Activated T-helper 1 cell treated with anti-CD3 and anti-CD28 coated beads, Interleukin-12 subunit alpha, Interleukin-12 subunit beta, Interleukin-2, Interleukin-4 antibody, amounts not matched to agents 30 ng/mL and 10 ng/mL and 1 ng/mL, durations not matched to agents 14 hours and 24 hours and 36 hours (primary cell): ENCODE measurements at regions of chr3 and their contacts with region 1.

Region 1: DNA sequence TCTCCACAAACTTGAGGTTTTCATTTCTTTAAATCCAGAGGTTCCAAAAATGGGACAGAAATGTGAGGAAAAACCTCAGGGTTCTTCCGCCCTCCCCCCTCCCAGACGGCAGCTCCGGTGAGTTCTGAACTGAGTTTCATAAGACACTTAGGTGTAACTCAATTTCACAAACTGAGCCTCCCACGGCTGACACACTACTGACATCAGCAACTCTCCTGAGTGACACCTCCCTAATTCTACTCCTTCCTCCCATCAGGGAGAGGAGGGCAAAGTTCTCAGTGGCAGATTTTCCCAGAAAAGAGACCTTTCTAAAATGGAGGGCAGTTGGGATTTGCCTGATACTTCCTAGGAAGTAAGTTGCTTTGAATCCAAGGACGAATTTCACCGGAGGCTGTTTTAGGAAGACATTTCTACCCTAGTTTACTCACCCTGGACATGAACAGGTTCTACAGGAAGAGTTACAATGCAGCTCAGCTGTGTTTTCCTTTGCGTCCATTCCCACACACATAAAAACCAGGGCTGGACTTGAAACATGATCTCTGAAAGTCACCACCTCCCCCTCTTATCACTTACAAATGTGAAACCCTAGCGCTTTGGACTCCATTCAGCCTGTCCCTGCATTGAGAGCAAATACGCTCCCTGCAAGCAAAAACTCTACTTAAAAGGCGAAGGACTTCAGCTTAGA is 78.1 kb upstream of the LMOD3 start:
- DNase-seq: peak; percentile 36
- H3K4me3 Mint-ChIP-seq: peak overlapping the region; percentile 92
- H3K27ac Mint-ChIP-seq: peak overlapping the region; percentile 92
- H3K4me1 Mint-ChIP-seq: peaks cover 79% of the 10 kb centered on the region
- H3K27me3 Mint-ChIP-seq: no peaks in the 10 kb centered on the region

Region 2: DNA sequence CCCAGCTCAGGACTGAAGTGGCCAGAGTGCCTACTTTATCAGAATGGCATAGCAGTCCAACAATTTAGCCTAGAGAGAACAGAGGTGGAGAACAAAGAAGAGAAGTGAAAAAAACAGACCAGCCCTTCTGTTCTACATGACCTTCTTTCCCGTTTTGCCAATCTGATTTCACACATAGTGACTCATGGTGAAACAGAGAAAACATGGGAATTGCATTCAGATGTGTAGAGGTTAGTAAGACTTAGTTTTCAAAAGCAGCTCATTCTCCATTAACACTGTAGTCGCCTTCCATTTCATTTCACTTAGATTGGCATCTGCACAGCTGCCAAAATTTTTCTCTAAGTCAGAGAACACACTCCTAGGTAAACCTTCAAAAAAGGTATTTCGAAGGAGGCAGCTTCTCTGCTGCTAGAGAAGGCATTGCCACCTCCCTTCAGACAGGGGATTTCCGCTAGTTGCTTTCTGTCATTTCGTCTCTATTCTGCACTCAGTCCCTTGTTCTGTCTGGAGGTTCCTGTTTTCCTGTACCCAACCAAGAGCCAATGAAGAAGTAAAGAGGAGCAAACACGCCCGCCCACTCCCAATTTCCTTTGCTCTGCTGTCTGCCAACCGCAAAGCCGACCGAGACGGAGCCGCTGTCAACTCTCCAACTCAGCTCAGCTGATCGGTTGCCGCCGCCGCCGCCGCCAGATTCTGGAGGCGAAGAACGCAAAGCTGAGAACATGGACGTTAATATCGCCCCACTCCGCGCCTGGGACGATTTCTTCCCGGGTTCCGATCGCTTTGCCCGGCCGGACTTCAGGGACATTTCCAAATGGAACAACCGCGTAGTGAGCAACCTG is 116.0 kb before region 1 on chr3 and contains the start of gene ARL6IP5:
- intact Hi-C with region 1: loop called (anchors 1 kb)
- DNase-seq: peak; percentile 89
- H3K4me3 Mint-ChIP-seq: peak within 1 kb of the TSS; percentile 98
- H3K27ac Mint-ChIP-seq: peak within 1 kb of the TSS; percentile 94
- H3K4me1 Mint-ChIP-seq: peaks cover 61% of the 10 kb centered on the region
- H3K27me3 Mint-ChIP-seq: no peaks in the 10 kb centered on the region
- total RNA-seq, gene ARL6IP5: 147 and 156 TPM in 2 replicates

Region 3: GRCh38 chr3:69094467-69095205 is 105.9 kb before region 1 on chr3:
- intact Hi-C with region 1: no loop called
- DNase-seq: no peak
- H3K4me3 Mint-ChIP-seq: peak overlapping the region; percentile 84
- H3K27ac Mint-ChIP-seq: peak overlapping the region; percentile 98
- H3K4me1 Mint-ChIP-seq: peaks cover 81% of the 10 kb centered on the region
- H3K27me3 Mint-ChIP-seq: no peaks in the 10 kb centered on the region

Region 4: GRCh38 chr3:69212411-69213139 is 12.0 kb after region 1 on chr3:
- intact Hi-C with region 1: loop called (anchors 1 kb)
- DNase-seq: no peak
- H3K4me3 Mint-ChIP-seq: peak overlapping the region; percentile 43
- H3K27ac Mint-ChIP-seq: peak overlapping the region; percentile 92
- H3K4me1 Mint-ChIP-seq: peaks cover 57% of the 10 kb centered on the region
- H3K27me3 Mint-ChIP-seq: no peaks in the 10 kb centered on the region

Region 5: DNA sequence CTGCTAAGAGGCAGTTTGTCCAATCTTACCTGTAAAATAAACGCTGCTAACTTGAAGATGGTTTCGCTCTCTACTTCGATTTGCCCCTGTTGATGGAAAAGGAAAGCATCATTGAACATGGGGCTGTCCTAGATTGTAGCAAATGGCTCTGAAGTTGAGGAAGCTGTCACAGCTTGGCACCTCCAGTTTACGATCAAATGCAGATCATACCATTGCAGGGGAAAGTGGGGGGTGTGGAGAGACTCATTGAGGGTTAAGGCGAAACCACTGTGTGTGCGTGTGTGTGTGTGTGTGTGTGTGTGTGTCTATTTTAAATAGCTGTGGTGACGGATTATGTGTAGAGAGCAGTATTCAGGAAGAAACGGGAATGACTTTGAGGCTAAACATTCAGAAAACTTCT is 49.5 kb after region 1 on chr3:
- intact Hi-C with region 1: loop called (anchors 1 kb)
- DNase-seq: peak; percentile 58
- H3K4me3 Mint-ChIP-seq: peak overlapping the region; percentile 71
- H3K27ac Mint-ChIP-seq: peak overlapping the region; percentile 86
- H3K4me1 Mint-ChIP-seq: peaks cover 28% of the 10 kb centered on the region
- H3K27me3 Mint-ChIP-seq: peaks cover 3% of the 10 kb centered on the region

Region 6: DNA sequence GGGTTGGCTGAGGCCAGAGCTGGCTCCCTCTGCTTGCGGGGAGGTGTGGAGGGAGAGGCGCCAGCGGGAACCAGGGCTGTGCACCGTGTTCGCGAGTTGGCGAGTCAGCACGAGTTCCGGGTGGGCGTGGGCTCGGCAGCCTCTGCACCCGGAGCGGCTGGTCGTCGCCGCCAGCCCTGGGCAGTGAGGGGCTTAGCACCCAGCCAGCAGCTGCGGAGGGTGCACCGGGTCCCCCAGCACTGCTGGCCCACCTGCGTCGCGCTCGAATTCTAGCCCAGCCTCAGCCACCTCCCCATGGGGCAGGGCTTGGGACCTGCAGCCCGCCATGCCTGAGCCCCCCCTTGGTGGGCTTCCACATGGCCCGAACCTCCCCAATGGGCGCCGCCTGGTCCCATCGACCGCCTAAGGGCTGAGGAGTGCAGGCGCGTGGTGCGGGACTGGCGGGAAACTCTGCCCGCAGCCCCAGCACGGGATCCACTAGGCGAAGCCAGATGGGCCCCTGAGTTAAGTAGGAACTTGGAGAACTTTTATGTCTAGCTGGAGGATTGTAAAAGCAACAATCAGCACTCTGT is 59.8 kb after region 1 on chr3:
- intact Hi-C with region 1: no loop called
- DNase-seq: no peak
- H3K4me3 Mint-ChIP-seq: no peak overlapping the region
- H3K27ac Mint-ChIP-seq: no peak overlapping the region
- H3K4me1 Mint-ChIP-seq: no peaks in the 10 kb centered on the region
- H3K27me3 Mint-ChIP-seq: peaks cover under 1% of the 10 kb centered on the region

Region 7: DNA sequence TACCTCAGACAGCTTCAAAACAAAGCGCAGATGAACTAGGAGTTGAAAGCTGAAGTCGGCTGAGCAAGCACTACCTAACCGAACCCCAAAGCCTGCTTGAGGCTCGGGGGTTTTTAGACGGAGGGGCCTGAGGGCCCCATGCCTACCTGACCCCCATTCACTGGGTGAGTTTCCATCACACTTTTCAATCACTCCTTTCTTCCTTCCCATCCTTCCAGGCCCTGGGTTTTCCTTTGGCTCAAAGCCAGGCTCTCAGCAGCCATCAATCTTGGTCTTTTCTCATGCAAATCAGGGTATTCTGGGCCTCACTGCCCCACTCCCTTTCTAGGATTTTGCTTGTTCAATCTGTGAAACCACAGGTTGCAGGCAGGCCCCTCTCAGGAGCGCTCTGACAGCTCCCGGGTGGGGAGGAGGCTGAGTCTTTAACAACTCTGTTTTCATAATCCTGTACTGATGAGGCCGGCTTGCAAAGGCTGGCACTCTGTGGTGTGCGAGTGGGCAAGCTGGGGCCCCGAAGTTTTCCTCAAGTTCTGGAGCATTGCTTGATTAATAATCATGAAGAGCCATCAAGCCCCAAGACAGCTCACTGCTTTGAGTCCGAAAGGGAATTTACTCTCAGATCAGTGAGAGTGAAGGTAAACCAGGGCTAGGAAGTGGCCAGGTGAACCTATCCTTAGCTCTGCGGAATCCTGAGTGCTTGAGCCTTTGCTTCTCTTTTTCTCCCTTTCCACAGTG is 87.8 kb after region 1 on chr3:
- intact Hi-C with region 1: loop called (anchors 1 kb)
- DNase-seq: no peak
- H3K4me3 Mint-ChIP-seq: peak overlapping the region; percentile 48
- H3K27ac Mint-ChIP-seq: peak overlapping the region; percentile 71
- H3K4me1 Mint-ChIP-seq: peaks cover 32% of the 10 kb centered on the region
- H3K27me3 Mint-ChIP-seq: no peaks in the 10 kb centered on the region

Region 8: DNA sequence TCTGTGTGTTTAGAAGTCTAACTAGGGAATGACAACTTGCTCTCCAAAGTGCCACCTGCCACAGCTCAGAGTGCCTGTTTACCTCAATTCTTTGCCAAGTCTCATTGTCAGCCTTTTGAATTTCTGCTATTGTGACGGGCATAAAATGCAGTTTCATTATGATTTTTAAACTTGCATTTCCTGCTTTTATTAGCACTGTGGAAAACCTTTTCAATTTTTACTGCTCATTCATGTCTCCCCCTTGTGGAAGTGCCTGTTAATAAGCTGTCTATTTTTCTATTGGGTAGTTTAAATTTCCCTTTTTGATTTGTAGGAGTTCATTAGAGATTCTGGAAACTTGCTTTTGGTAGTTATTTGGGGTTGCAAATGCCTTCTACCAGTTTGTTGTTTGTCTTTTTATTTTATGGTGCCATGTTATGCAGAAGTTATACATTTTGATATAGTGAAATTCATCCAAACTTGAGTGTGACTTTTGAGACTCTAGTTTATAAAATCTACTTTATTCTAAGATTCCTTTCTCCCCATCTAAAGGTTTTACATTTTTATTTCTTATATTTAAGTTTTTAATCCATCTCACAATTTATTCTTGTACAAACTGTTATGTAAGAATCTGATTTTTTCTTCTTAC is 239.2 kb after region 1 on chr3:
- intact Hi-C with region 1: loop called (anchors 1 kb)
- DNase-seq: no peak
- H3K4me3 Mint-ChIP-seq: no peak overlapping the region
- H3K27ac Mint-ChIP-seq: no peak overlapping the region
- H3K4me1 Mint-ChIP-seq: peaks cover 78% of the 10 kb centered on the region
- H3K27me3 Mint-ChIP-seq: no peaks in the 10 kb centered on the region